AG04450 (cell line): ENCODE measurements at regions of chr14 and their contacts with region 1.

Region 1: GRCh38 chr14:32560209-32560857 is 231.2 kb downstream of the AKAP6 start:
- DNase-seq: peak; percentile 71
- H3K4me3 ChIP-seq: no peak overlapping the region
- H3K27ac ChIP-seq: no peak overlapping the region
- H3K27me3 ChIP-seq: no peaks in the 10 kb centered on the region
- CTCF ChIP-seq: peak; percentile 95

Region 2: GRCh38 chr14:32259368-32260013 is 300.8 kb before region 1 on chr14:
- CTCF ChIA-PET with region 1: interaction called, 23 read pairs
- POLR2A ChIA-PET with region 1: no interaction called
- DNase-seq: peak; percentile 24
- H3K4me3 ChIP-seq: no peak overlapping the region
- H3K27ac ChIP-seq: no peak overlapping the region
- H3K27me3 ChIP-seq: peaks cover 8% of the 10 kb centered on the region
- CTCF ChIP-seq: no peak

Region 3: DNA sequence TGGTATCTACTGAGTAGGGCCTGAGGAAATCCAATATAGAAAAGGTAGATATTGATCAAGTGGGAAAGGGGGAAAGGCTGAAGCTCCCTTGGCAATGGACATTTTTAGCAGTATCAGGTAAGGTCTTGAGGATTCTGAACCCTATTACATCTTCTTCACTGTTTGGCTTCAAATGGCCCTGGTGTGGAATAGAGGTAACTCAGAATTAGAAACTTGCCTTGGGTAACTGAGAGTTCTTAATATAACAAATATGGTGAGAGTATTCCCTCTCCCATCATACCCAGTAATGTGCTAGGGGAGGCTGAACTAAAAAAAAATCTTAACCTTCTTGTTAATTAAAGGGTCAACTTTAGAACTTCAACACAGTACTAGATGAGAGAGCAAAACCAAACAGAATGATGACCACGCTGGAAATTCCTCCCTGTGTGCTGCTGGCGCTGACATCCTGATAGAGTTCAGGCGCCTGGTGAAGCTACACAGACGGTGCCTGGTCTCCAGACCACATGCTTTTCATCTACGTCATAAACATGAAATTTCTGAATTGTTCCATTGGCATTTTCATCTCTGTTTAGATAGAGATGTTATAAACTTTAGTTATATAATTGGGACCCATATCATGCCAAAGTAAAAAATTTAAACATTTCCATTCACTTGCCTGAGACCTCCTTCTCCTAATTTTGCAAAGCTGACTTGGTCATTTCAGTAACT is 103.0 kb before region 1 on chr14:
- CTCF ChIA-PET with region 1: no interaction called
- POLR2A ChIA-PET with region 1: no interaction called
- DNase-seq: peak; percentile 63
- H3K4me3 ChIP-seq: no peak overlapping the region
- H3K27ac ChIP-seq: no peak overlapping the region
- H3K27me3 ChIP-seq: no peaks in the 10 kb centered on the region
- CTCF ChIP-seq: no peak

Region 4: DNA sequence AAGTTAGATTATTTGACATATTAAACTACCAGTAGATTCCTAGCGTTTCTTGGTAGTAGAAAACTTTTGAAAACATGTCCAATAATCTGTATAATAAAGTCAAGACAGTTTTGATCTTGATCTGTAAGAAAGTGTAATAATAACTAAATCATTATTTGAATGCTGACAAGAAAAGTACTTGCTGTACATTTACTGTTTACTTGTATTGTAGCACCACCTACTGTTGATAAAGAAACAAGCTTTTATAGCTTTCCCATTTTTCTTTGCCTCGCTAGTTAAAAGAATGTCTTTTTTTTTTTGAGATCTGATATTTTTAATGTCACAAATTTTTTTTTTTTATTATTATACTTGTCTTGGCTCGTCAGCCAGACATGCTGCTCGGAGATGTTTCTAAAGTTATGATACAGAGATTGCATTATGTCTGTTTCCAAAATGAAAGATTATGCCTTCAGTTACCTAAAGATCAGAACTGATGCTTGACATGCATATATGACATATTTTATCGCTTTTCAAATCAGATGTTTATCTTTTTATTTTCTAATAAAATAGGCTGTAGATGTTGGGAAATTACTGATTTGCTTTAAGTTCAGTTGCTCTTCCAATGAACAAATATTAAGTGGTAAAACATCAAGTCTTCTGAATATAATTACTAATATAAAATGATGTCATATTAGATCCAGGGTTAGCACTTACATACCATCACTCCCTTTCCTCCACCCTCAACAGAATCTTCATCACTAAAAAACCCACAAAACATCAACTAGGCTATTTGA is 90.8 kb before region 1 on chr14:
- CTCF ChIA-PET with region 1: interaction called, 14 read pairs
- POLR2A ChIA-PET with region 1: interaction called, 8 read pairs
- DNase-seq: no peak
- H3K4me3 ChIP-seq: no peak overlapping the region
- H3K27ac ChIP-seq: no peak overlapping the region
- H3K27me3 ChIP-seq: no peaks in the 10 kb centered on the region
- CTCF ChIP-seq: peak; percentile 54

Region 5: GRCh38 chr14:32524609-32525375 is 35.5 kb before region 1 on chr14:
- CTCF ChIA-PET with region 1: interaction called, 14 read pairs
- POLR2A ChIA-PET with region 1: interaction called, 3 read pairs
- DNase-seq: no peak
- H3K4me3 ChIP-seq: no peak overlapping the region
- H3K27ac ChIP-seq: no peak overlapping the region
- H3K27me3 ChIP-seq: no peaks in the 10 kb centered on the region
- CTCF ChIP-seq: no peak

Region 6: DNA sequence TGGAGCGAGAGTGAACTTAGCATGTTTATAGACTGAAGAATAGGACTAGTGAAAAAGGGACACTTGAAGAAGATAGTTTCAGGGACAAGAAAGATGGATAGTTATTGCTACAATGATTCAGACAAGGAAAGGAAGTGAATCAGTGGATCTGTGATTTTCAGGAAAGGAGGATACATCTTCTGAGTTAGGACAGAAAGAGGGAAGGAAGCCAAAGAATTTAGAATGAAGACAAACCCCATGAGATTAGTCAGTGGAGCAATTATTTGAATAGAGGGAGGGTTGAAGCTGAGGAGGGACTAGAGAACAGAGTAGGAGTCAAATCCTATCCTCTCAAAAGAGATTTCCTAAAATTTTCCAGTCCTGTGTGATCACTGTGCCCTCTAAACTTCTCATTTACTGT is 51.4 kb after region 1 on chr14:
- CTCF ChIA-PET with region 1: no interaction called
- POLR2A ChIA-PET with region 1: no interaction called
- DNase-seq: peak; percentile 27
- H3K4me3 ChIP-seq: no peak overlapping the region
- H3K27ac ChIP-seq: no peak overlapping the region
- H3K27me3 ChIP-seq: no peaks in the 10 kb centered on the region
- CTCF ChIP-seq: no peak

Region 7: GRCh38 chr14:32710731-32711680 is 150.7 kb after region 1 on chr14:
- CTCF ChIA-PET with region 1: no interaction called
- POLR2A ChIA-PET with region 1: no interaction called
- DNase-seq: no peak
- H3K4me3 ChIP-seq: peak overlapping the region; percentile 40
- H3K27ac ChIP-seq: no peak overlapping the region
- H3K27me3 ChIP-seq: no peaks in the 10 kb centered on the region
- CTCF ChIP-seq: peak; percentile 45